ENCODE measurements at regions of chr16 and their contacts with region 1.

Region 1: DNA sequence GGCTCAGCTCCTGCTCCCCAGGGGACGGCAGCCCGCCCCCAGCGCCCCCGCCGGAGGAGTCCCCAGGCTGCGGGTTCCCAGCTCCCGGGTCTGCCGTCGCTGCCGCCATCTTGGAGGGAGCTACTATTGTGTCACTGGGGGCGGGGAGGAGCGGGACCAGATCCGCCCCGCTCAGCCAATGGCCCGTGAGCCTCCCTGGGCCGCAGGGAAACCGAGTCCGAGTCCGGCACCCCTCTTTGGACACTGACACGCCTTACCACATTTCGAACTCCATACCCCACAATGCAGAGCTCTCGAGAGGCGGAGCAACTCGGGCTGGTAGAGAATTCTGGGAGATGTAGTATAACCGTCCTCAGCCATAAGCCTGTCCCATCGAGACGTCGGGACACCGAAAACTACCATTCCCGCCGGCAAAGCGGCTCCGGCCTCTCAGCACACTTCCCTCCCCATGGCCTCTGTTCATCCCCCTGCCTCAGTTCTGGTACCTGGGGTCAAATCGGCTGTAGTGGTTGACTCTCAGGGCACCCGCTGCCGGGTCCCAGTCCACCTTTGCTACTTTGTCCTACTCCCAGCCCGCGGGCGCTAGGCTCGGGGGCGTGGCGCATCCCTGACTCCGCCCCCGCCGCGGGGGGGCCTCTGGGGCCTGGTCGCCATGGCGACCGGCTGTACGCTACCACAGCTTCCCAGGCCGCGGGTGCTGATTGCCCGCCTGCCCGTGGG is at the starts of genes RANBP10 and TSNAXIP1:
- DNase-seq: peak; percentile 99
- H3K4me3 Mint-ChIP-seq: peak within 1 kb of the TSS; percentile 97
- H3K27ac Mint-ChIP-seq: peak within 1 kb of the TSS; percentile 97
- H3K4me1 Mint-ChIP-seq: peaks cover 37% of the 10 kb centered on the region
- H3K27me3 Mint-ChIP-seq: peaks cover 2% of the 10 kb centered on the region
- total RNA-seq, gene RANBP10: 18.2 and 18.6 TPM in 2 replicates
- total RNA-seq, gene TSNAXIP1: 0.65 and 0.80 TPM in 2 replicates

Region 2: DNA sequence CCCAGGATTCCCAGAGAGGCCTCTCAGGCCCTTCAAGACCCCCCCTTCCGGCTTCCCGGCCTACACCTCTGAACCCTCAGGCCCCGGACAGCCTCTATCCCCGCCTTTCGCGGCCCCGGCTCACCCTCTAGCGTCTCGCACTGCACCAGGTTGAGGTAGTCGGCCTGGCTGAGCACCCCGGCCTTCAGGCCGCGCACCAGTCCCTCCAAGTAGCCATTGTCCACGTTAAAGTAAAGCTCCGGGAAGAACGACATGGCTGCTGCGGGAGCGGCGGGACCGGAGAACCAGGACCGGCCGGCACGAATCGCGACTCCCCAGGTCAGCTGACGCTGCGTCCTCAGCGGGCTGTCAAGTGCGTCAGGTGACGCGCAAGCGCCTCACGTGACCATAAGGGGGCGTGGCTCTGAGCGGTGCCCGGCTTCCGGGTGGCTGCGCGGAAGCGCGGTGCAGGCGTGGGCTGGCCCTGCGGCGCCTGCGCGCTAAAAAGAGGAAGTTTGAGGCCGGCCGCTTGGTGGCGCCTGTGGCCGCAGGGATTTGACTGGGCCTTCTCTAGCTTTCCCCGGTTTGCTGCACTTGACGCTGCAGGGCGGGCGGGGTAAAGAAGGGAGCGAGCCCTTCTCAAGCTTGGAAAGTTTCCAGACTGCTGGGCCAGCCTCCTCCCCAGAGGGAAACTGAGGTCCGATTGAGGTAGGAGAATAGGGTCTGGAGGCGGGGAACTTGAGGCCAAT is 325.6 kb before region 1 on chr16 and contains the start of gene ATP6V0D1:
- intact Hi-C with region 1: loop called (anchors 10 kb)
- DNase-seq: peak; percentile 100
- H3K4me3 Mint-ChIP-seq: peak within 1 kb of the TSS; percentile 100
- H3K27ac Mint-ChIP-seq: peak within 1 kb of the TSS; percentile 97
- H3K4me1 Mint-ChIP-seq: peaks cover 17% of the 10 kb centered on the region
- H3K27me3 Mint-ChIP-seq: no peaks in the 10 kb centered on the region
- total RNA-seq, gene ATP6V0D1: 30.9 and 31.8 TPM in 2 replicates

Region 3: DNA sequence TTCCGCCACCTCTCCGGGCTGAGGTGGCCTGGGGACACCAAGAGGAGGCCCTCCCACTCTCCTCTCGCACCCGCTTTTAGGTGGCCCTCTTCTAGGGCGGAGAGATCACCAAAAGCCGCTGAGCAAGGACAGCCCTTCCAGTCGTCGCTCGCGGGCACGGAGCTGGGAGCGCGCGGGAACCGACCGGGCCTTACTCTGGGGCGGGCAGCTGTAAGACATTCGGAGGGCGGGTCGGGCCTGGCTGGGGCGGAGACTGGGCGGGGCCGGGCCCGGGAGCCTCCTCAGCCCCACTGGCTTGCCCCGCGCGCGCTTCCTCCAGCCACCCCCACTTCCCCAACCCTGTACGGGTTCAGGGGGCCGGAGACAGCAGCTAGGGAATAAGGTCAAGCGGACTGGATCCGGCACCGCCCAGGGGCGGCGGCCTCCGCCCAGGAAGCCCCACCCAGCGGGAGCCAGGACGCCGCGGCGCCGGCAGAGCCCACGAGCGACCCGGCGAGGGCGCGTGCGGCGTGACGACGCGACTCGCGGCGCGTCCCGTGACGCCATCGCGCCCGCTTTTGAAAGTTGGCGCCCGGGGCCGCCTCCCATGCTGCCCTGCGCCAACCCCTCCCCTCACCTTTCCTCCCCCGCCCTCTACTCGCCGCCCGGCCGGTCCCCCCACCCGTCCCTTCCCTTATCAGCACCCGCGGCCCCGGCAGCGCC is 244.6 kb before region 1 on chr16:
- intact Hi-C with region 1: loop called (anchors 1 kb)
- DNase-seq: peak; percentile 99
- H3K4me3 Mint-ChIP-seq: peak overlapping the region; percentile 89
- H3K27ac Mint-ChIP-seq: peak overlapping the region; percentile 93
- H3K4me1 Mint-ChIP-seq: peaks cover 30% of the 10 kb centered on the region
- H3K27me3 Mint-ChIP-seq: no peaks in the 10 kb centered on the region

Region 4: GRCh38 chr16:67719048-67719777 is 87.4 kb before region 1 on chr16 and contains the start of gene GFOD2:
- intact Hi-C with region 1: loop called (anchors 1 kb)
- DNase-seq: peak; percentile 100
- H3K4me3 Mint-ChIP-seq: peak within 1 kb of the TSS; percentile 88
- H3K27ac Mint-ChIP-seq: peak within 1 kb of the TSS; percentile 96
- H3K4me1 Mint-ChIP-seq: peaks cover 32% of the 10 kb centered on the region
- H3K27me3 Mint-ChIP-seq: no peaks in the 10 kb centered on the region
- total RNA-seq, gene GFOD2: 16.2 and 18.3 TPM in 2 replicates

Region 5: DNA sequence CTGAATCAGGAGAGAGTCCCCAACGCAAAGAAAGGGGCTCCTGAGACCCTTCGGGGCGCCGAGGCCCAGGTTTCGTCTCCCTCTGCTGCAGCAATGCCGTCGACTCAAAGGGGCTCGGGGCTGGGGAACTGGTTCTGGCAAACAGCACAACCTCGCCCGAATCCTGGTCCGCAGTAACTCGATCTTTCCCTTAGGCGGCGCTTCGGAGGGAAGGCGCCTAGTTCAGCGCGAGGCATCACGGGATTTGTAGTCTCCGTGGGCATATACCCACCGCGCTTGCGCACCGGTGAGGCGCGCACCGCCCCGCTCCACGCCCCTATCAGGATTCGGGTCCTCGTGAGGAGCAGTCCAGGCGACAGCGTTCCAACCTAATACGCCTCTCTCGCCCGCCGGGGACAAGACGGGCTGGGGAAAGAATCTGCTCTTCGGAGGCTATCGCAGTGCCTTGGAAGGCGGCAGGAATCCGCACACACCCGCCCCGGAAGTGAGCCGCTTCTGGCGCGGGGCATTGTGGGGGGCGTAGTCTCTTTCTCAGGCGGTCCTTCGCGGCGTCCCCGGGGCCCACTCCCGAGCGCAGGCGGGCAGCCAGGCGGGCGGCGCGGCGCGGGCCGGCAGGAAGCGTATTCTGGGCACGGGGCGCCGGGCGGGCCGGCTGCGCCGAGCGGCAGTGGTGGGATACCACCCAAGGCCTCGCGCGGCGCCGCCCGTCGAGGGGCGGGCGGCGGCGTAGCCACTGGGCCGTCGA is 35.3 kb after region 1 on chr16 and contains the start of gene THAP11:
- intact Hi-C with region 1: loop called (anchors 1 kb)
- DNase-seq: peak; percentile 99
- H3K4me3 Mint-ChIP-seq: peak within 1 kb of the TSS; percentile 93
- H3K27ac Mint-ChIP-seq: peak within 1 kb of the TSS; percentile 94
- H3K4me1 Mint-ChIP-seq: peaks cover 26% of the 10 kb centered on the region
- H3K27me3 Mint-ChIP-seq: no peaks in the 10 kb centered on the region
- total RNA-seq, gene THAP11: 46.4 and 48.7 TPM in 2 replicates

Region 6: GRCh38 chr16:67968400-67969253 is 162.0 kb after region 1 on chr16 and contains the start of gene SLC12A4:
- intact Hi-C with region 1: loop called (anchors 1 kb)
- DNase-seq: peak; percentile 98
- H3K4me3 Mint-ChIP-seq: peak within 1 kb of the TSS; percentile 97
- H3K27ac Mint-ChIP-seq: peak within 1 kb of the TSS; percentile 95
- H3K4me1 Mint-ChIP-seq: peaks cover 24% of the 10 kb centered on the region
- H3K27me3 Mint-ChIP-seq: peaks cover 2% of the 10 kb centered on the region
- total RNA-seq, gene SLC12A4: 40.6 and 44.7 TPM in 2 replicates

Region 7: DNA sequence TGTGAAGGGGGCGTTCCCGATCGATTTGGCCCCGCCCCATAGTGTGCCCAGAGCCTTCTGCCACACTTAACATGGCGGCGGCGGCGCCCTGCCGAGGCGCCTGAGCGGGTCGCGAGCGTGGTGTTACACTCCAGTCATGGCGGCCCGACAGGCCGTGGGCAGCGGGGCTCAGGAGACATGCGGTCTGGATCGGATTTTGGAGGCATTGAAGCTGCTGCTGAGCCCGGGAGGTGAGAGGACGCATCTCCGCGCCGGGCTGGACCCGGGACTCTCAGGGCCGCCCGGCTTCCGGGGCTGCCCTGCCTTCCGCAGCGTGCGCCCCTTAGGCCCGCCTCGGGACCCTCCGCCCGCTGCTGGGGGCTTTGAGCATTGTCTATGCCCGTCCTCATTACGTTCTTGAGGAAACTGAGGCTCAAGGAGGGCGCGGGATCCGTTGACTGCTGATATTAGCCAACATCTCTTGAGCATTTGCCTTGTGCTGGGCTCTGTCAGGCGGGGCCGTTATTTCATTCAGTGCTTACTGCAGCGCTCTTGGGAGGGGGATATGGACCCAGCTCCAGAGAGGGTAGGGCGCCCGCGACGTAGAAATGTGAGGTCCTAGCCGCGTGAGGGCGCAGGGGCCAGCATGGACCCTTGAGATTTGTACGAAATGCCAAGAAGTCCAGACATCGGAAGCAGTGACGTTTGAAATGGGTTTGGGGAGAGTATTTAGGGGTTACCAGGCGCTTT is 1037.1 kb after region 1 on chr16 and contains the start of gene TANGO6:
- intact Hi-C with region 1: loop called (anchors 10 kb)
- DNase-seq: peak; percentile 97
- H3K4me3 Mint-ChIP-seq: peak within 1 kb of the TSS; percentile 87
- H3K27ac Mint-ChIP-seq: peak within 1 kb of the TSS; percentile 95
- H3K4me1 Mint-ChIP-seq: peaks cover 20% of the 10 kb centered on the region
- H3K27me3 Mint-ChIP-seq: no peaks in the 10 kb centered on the region
- total RNA-seq, gene TANGO6: 35.6 and 40.0 TPM in 2 replicates